H1 (cell line): ENCODE measurements at regions of chr3 and their contacts with region 1.

Region 1: GRCh38 chr3:140910860-140911259 is 30.8 kb upstream of the SLC25A36 start:
- DNase-seq: peak; percentile 9 to 66
- H3K4me3 ChIP-seq: peak overlapping the region; percentile 35 to 54 (median 42); a peak in 6 of 8 replicates
- H3K27ac ChIP-seq: no peak overlapping the region
- H3K4me1 ChIP-seq: no peaks in the 10 kb centered on the region; a peak in 2 of 7 replicates
- H3K27me3 ChIP-seq: no peaks in the 10 kb centered on the region; a peak in 1 of 7 replicates
- CTCF ChIP-seq: peak in 2 of 3 experiments; percentile 21 to 43; a peak in 2 of 4 replicates
- EP300 ChIP-seq: no peak
- POLR2A ChIP-seq: no peak
- RAD21 ChIP-seq: no peak

Region 2: DNA sequence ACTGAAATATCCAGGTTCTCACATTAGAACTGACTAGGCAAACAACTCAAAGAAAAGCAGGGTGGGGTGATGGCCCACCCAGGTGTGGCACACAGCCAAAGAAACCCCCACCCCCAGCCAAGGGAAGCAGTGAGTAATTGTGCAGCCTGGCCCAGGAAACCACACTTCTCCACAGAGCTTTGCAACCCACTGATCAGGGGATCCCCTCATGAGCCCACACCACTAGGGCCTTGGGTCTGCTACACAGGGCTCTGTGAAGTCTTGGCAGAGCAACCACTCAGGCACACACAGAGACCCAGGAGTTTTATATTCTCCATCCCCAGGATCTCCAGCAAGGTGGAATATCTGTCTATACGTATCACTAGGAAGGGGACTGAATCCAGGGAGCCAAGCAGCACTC is 255.2 kb before region 1 on chr3:
- CTCF ChIA-PET with region 1: no interaction called
- POLR2A ChIA-PET with region 1: no interaction called
- DNase-seq: no peak
- H3K4me3 ChIP-seq: no peak overlapping the region
- H3K27ac ChIP-seq: no peak overlapping the region
- H3K4me1 ChIP-seq: no peaks in the 10 kb centered on the region
- H3K27me3 ChIP-seq: no peaks in the 10 kb centered on the region
- CTCF ChIP-seq: no peak
- EP300 ChIP-seq: no peak
- POLR2A ChIP-seq: no peak
- RAD21 ChIP-seq: no peak

Region 3: GRCh38 chr3:140883428-140884040 is 27.3 kb before region 1 on chr3:
- CTCF ChIA-PET with region 1: no interaction called
- POLR2A ChIA-PET with region 1: no interaction called
- DNase-seq: no peak
- H3K4me3 ChIP-seq: no peak overlapping the region
- H3K27ac ChIP-seq: no peak overlapping the region
- H3K4me1 ChIP-seq: no peaks in the 10 kb centered on the region
- H3K27me3 ChIP-seq: no peaks in the 10 kb centered on the region
- CTCF ChIP-seq: no peak
- EP300 ChIP-seq: no peak
- POLR2A ChIP-seq: no peak
- RAD21 ChIP-seq: no peak

Region 4: GRCh38 chr3:140922634-140923033 is 11.8 kb after region 1 on chr3:
- CTCF ChIA-PET with region 1: interaction called, 11 read pairs
- POLR2A ChIA-PET with region 1: no interaction called
- DNase-seq: no peak
- H3K4me3 ChIP-seq: no peak overlapping the region
- H3K27ac ChIP-seq: no peak overlapping the region
- H3K4me1 ChIP-seq: peaks cover 0 to under 1% (median 0%) of the 10 kb centered on the region in 4 experiments; a peak in 1 of 7 replicates
- H3K27me3 ChIP-seq: no peaks in the 10 kb centered on the region
- CTCF ChIP-seq: peak in 1 of 3 experiments; percentile 44; a peak in 2 of 4 replicates
- EP300 ChIP-seq: no peak
- POLR2A ChIP-seq: no peak
- RAD21 ChIP-seq: peak; percentile 55 to 57

Region 5: GRCh38 chr3:141174674-141175073 is 263.8 kb after region 1 on chr3:
- CTCF ChIA-PET with region 1: no interaction called
- POLR2A ChIA-PET with region 1: no interaction called
- DNase-seq: no peak
- H3K4me3 ChIP-seq: no peak overlapping the region
- H3K27ac ChIP-seq: no peak overlapping the region
- H3K4me1 ChIP-seq: peaks cover 0 to 6% (median 2%) of the 10 kb centered on the region in 4 experiments; a peak in 4 of 7 replicates
- H3K27me3 ChIP-seq: no peaks in the 10 kb centered on the region
- CTCF ChIP-seq: no peak
- EP300 ChIP-seq: no peak
- POLR2A ChIP-seq: no peak
- RAD21 ChIP-seq: no peak